ENCODE measurements at regions of chr9 and their contacts with region 1.

Region 1: DNA sequence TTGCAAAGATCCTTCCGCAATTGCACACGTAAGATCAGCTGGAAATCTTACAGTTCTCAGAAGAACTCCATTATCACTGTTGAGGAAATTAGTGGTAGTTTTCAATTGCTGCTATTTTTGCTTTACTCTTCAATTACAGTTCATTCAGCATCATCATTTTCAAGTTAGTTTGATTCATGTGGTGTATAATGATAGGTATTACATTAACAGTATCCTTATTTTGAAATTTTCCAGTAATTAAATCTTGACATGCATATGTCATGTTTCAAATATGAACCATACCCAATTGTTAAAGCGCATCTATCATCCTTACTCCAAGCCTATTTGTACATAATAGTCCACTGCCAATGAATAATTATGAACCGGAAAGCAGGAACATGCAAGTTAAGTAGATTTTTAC is 60.3 kb downstream of the NR6A1 start:
- DNase-seq: no peak
- ATAC-seq: no peak

Region 2: DNA sequence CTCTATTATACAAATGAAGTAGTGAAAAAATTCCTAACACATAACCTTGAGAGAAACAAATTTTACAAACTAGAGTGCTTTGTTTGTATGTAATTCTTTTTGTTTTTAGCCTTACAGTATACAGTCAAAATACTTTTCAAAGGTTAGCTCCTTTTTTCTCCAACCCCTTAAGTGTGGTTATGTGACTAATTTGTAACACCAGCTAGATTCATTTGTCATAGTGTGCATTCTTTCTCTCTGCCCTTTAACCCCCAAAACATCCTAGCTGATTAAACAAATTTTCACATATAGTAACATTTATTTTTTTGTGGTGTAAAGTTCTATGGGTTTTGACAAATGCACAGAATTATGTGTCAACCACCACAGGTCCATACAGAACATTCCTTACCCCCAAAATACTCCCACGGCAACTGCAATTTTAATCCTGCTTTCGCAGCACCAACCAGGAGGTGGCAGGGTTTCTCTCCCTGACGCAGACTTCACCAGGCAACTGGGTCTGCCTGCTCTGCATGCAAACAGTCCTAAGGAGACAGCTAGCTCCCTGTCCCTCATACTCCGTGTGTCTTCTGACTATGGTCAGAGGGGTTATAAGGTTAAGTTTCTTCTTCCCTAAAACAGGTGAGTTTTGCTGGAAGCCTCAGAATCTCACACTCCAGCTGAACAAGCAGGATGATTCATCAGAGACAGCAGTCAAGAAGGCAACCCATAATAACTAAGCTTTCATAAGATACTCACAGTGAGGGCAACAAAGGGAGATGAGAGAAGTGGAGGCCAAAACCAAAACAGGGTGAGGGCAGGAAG is 159.1 kb before region 1 on chr9:
- intact Hi-C with region 1: loop called in 1 of 2 experiments (anchors 5 kb)
- DNase-seq: peak; percentile 38 to 50
- ATAC-seq: peak; percentile 67

Region 3: DNA sequence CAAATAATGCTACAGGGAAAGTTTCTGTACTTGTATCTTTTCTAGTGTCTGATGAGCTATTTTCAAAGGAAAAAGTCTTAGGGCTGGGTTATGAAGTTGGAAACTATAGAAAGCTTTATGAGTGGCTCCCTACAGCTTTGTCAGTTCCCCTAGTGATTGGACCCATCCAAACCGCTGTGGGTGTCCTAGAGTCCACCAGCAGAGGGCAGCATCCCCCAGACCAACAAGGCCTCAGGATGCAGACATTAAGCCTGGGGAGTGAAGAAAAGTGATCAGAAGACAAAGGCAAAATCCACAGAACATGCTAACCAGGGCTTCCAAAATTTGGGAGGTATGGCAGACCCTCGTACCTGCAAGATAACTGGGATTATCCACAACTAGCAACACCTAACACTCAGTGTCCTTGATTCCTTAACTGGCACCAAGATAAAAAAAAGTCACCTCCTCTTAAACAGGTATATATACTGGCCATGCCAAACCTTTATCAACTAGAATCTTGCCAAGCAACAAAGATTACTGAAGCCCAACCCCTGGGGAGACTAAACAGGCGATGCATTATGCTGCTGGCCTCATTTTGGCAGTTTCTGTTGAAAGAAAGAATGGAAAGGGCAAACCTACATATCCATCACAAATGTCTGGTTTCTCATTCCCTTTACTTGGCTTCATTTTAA is 93.2 kb before region 1 on chr9:
- intact Hi-C with region 1: loop called (anchors 2 to 10 kb)
- DNase-seq: peak; percentile 58 to 86
- ATAC-seq: peak; percentile 81

Measured in left colon (tissue), 2 donors.